AG04449 (cell line): ENCODE measurements at regions of chr11 and their contacts with region 1.

Region 1: DNA sequence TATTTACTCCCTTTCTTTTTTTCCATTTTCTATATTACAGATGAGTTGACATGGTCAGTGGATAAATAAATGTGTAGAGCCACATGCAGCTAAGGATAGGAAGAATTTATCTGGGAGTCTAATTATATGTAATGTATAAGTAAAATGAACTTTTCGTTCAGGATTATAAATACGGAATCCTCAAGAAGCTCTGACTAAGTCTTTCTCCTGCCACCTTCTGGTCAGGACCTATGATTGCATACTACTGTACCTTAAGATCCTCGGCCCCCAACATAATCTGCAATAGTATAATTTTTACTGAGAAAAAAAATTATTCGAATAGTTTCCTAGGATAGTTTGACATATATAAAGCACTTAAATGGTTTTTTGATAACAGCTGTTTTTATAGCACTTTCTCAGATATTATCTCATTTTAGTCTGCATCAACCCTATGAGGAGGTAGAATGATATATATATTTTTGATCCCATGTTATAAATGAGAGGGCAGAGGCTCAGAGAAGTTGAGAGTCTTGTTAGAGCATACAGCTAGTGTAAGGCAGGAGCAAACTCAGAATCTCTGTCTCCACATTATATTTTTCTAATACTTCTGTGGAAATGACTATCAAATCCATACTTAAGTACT is 36.1 kb downstream of the CCDC90B start:
- DNase-seq: no peak
- H3K4me3 ChIP-seq: no peak overlapping the region
- CTCF ChIP-seq: peak; percentile 53

Region 2: DNA sequence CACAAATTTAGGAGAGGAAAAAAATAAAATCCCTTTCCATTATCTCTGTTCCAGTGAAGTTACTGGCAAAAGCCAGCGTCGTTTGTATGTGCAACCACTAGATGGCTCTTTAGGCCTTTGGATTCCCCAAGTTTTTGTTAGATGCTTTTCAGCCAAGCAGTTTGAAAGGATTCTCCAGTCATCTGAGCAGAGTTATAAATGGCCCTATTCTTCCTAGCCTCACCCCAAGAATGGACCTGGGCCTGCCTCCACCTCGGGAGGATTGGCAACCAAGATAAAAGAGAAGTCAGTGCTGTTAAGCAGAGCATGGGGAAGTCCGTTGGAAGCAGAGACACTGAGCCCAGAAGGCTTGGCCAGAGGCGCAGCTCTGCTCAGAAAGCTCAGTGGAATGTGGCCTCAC is 531.8 kb before region 1 on chr11:
- CTCF ChIA-PET with region 1: interaction called, 11 read pairs
- POLR2A ChIA-PET with region 1: no interaction called
- DNase-seq: peak; percentile 7
- H3K4me3 ChIP-seq: no peak overlapping the region
- CTCF ChIP-seq: peak; percentile 58

Region 3: DNA sequence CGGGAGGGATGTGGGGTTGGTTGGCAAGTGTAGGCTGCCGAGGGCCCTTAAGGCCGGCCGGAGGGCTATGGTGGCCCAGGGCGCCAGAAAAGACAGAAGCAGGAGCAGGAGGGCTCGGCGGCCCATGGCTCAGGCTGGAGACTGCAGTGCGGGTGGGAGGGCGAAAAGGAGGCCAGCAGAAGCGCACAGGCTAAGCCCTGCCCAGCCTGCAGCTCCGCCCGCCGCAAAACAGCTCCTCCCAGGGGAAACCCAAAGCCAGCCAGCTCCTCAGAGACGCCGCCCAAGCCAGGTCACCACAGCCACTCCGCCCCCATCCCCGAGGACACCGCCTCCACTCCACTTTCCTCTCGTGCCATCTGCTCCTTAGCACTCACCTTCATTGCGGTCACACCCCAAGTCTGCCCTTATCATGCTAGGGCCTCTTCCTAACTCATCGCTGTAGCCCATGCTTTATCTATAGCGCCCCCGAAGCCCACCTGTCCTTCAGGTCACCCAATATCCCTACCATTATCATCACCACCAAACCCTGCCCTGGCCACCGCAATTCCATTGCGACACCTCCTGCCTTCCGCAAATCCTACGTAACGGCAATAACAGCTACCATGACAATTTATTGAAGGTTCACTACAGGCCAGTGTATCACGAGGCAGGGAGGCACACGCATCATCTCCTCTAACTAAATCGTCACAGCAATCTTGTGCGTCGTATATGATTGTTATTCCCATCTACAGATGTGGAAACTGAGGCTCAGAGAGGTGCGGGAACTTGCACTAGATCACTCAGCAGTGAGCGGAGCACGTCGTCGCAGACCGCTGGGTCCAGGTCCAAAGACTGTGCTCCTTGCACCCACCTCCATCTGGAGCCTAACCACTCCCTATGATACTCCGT is 349.6 kb before region 1 on chr11 and contains the start of gene PRCP:
- CTCF ChIA-PET with region 1: interaction called, 74 read pairs
- POLR2A ChIA-PET with region 1: no interaction called
- DNase-seq: peak; percentile 31
- H3K4me3 ChIP-seq: peak within 1 kb of the TSS; percentile 86
- CTCF ChIP-seq: no peak

Region 4: DNA sequence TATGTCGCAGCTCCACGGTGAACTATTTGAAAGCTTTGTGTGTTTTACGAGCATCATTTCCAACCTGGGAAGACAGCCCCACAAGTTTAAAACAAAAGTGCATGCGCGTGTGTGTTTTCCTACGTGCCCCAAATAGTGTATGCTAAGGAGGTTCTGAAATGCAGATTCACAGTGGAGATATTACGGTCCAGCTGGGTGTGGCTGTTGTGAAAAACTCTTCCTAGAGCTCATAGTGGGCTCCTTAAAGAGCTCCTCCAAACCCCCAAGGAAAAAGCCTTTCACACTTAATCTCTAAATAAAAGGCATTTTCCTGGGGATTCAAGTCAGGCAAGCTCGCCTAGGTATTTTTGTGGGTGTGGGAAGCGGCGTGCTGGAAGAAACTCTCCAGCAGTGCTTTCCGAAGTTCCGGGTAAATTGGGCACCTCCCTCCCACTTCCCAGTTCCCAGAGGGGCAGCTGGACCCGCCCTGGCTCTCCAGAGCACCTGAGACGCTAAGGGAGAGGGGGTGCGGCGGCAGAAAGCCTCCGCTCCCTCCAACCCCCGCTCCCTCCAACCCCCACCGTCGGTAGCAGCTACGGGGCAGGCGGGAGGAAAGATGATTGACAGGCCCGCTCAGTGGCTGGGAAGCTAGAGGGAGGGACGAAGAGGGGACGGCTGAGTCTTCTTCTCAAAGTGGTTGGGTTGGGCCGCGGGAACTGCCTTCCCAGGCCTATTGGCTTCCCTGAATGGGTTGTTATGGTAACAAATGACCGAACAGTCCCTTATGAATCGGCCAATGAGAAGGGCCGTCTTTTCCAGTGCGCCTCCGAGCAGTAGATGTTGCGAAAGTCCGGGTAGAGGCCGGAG is 93.7 kb before region 1 on chr11:
- CTCF ChIA-PET with region 1: no interaction called
- POLR2A ChIA-PET with region 1: no interaction called
- DNase-seq: peak; percentile 99
- H3K4me3 ChIP-seq: peak overlapping the region; percentile 73
- CTCF ChIP-seq: no peak

Region 5: GRCh38 chr11:83222499-83222898 is 27.6 kb before region 1 on chr11:
- CTCF ChIA-PET with region 1: interaction called, 11 read pairs
- POLR2A ChIA-PET with region 1: no interaction called
- DNase-seq: no peak
- H3K4me3 ChIP-seq: no peak overlapping the region
- CTCF ChIP-seq: no peak

Region 6: GRCh38 chr11:83285771-83286528 is 35.9 kb after region 1 on chr11 and contains the start of gene CCDC90B:
- CTCF ChIA-PET with region 1: interaction called, 10 read pairs
- POLR2A ChIA-PET with region 1: no interaction called
- DNase-seq: peak; percentile 84
- H3K4me3 ChIP-seq: peak within 1 kb of the TSS; percentile 94
- CTCF ChIP-seq: no peak